Activated CD8-positive, alpha-beta memory T cell treated with anti-CD3 and anti-CD28 coated beads, Interleukin-2, amount 10 ng/mL, durations not matched to agents 7 days and 5 days (primary cell): ENCODE measurements at regions of chr17 and their contacts with region 1.

Region 1: DNA sequence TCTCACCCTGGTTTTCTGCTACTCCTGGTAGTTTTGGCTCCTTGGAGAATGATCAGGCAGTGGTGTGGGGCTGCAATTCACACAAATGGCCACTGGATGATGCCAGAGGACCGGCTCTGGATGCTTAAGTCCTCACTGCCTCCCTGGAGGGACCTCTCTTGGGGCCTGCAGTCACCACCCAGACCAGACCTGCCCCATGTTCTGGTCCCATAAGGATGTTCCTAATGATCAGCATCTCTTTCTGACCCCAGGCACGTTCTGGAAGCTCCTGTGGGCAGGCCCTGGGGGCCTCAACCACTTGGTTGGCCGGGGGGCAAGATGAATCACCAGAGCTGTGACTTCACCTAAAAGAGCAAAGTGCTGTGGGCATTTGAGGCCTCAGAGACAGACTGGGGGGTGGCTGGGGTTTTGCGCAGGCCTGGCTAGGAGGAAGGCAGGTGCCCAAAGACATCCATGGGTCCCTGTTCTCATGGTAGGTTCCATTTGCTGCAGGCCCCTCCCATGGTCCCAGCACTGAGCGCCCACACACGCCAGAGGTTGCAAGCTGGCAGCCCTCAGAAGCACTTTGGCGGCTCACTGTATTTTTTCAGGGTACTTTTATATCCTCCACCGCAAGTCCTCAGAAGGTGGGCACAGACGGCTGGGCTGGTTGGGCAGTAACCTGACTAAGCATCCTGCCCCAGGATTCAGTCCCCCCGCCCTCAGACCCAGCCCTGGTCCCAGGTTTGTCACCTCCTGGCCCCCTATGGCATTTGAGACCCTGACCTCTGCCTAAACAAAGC is 53.2 kb downstream of the NT5M start:
- DNase-seq: peak; percentile 79
- ATAC-seq: peak; percentile 86
- H3K4me3 Mint-ChIP-seq: no peak overlapping the region
- H3K27ac Mint-ChIP-seq: peak overlapping the region; percentile 4
- H3K4me1 Mint-ChIP-seq: no peaks in the 10 kb centered on the region
- H3K27me3 Mint-ChIP-seq: peaks cover 28% of the 10 kb centered on the region

Region 2: DNA sequence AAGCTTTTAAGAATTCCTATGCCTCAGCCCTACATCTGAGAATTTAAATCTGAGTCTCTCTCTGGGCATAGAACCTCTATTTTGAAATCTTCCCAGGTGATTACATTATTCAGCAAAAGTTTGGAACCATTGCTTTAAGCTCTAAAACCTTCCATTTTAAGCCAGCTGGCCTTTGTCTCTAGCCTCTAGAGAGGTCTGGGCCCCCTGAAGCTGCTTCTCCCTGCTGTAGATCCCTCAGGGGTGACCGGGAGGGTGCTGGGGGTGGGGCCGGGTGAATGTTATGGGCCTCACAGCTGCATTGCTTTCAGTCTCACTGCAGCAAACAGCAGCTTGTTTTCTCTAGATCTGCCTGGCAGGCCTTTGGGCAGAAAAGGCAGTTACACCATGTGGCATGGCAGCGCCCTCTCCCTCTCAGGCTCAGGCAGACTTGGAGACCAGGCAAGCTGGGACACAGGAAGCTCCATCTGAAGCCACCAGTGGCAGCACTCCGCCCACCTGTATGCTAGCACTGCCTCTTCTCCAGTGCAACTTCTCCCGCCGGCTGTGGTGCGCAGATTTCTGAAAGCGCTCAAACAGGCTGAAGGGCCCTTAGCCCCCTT is 247.8 kb before region 1 on chr17:
- CTCF ChIA-PET with region 1: no interaction called
- DNase-seq: no peak
- ATAC-seq: no peak
- H3K4me3 Mint-ChIP-seq: no peak overlapping the region
- H3K27ac Mint-ChIP-seq: no peak overlapping the region
- H3K4me1 Mint-ChIP-seq: peaks cover 34% of the 10 kb centered on the region
- H3K27me3 Mint-ChIP-seq: no peaks in the 10 kb centered on the region

Region 3: GRCh38 chr17:17206124-17206912 is 150.0 kb before region 1 on chr17 and contains the start of gene PLD6:
- CTCF ChIA-PET with region 1: no interaction called
- DNase-seq: peak; percentile 94
- ATAC-seq: peak; percentile 70
- H3K4me3 Mint-ChIP-seq: peak within 1 kb of the TSS; percentile 80
- H3K27ac Mint-ChIP-seq: peak within 1 kb of the TSS; percentile 88
- H3K4me1 Mint-ChIP-seq: peaks cover 38% of the 10 kb centered on the region
- H3K27me3 Mint-ChIP-seq: no peaks in the 10 kb centered on the region
- total RNA-seq, gene PLD6: 5.2 to 12.5 TPM

Region 4: DNA sequence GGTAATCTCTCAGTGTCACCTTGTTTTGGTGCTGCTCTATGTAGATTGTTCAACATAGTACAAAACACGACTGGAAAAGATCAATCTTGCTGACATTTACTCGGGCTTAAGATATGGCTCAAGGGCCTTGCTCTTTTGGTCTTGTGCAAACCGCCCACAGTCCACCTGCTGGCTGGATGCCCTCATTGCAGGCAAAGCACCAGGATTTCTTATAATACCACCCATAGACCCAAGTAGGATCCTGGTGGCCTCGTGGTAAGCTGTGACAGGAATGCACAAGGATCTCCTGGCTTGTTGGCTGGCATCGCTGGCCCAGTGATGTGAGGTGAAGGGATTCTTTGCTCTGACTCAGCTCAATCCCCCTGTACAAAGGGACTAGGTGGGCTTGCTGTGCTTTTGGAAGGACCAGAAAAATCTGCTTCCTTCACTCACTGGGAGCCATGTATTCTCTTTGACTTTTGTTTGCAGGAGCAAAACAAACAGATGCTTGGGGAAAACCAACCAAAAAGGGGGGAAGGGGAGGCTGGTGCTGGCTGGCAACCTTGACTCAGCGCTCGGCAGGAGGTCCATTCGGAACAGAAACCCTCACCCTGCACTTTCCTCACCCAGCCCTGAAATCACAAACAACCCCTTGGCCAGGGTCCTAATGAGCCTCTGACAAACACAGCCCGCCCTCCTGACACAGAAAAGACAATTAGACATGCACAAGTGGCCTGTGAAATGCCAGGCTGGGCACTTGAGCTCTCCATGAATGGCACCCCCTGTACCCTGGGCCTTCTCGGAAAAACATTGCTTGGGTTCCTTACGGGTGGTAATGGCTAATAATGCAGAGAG is 83.9 kb after region 1 on chr17:
- CTCF ChIA-PET with region 1: interaction called, 13 read pairs
- DNase-seq: peak; percentile 83
- ATAC-seq: peak; percentile 88
- H3K4me3 Mint-ChIP-seq: no peak overlapping the region
- H3K27ac Mint-ChIP-seq: peak overlapping the region; percentile 28
- H3K4me1 Mint-ChIP-seq: peaks cover 2% of the 10 kb centered on the region
- H3K27me3 Mint-ChIP-seq: no peaks in the 10 kb centered on the region

Region 5: GRCh38 chr17:17446666-17447155 is 90.4 kb after region 1 on chr17:
- CTCF ChIA-PET with region 1: interaction called, 10 read pairs
- DNase-seq: no peak
- ATAC-seq: no peak
- H3K4me3 Mint-ChIP-seq: no peak overlapping the region
- H3K27ac Mint-ChIP-seq: no peak overlapping the region
- H3K4me1 Mint-ChIP-seq: no peaks in the 10 kb centered on the region
- H3K27me3 Mint-ChIP-seq: peaks cover 10% of the 10 kb centered on the region

Region 6: GRCh38 chr17:17523001-17523730 is 166.8 kb after region 1 on chr17:
- CTCF ChIA-PET with region 1: no interaction called
- DNase-seq: no peak
- ATAC-seq: no peak
- H3K4me3 Mint-ChIP-seq: no peak overlapping the region
- H3K27ac Mint-ChIP-seq: no peak overlapping the region
- H3K4me1 Mint-ChIP-seq: no peaks in the 10 kb centered on the region
- H3K27me3 Mint-ChIP-seq: no peaks in the 10 kb centered on the region

Region 7: GRCh38 chr17:17591355-17592298 is 235.3 kb after region 1 on chr17 and contains the start of gene PEMT:
- CTCF ChIA-PET with region 1: interaction called, 17 read pairs
- DNase-seq: peak; percentile 98
- ATAC-seq: peak; percentile 96
- H3K4me3 Mint-ChIP-seq: peak within 1 kb of the TSS; percentile 84
- H3K27ac Mint-ChIP-seq: peak within 1 kb of the TSS; percentile 90
- H3K4me1 Mint-ChIP-seq: peaks cover 22% of the 10 kb centered on the region
- H3K27me3 Mint-ChIP-seq: no peaks in the 10 kb centered on the region
- total RNA-seq, gene PEMT: 17.5 to 18.6 TPM

Region 8: DNA sequence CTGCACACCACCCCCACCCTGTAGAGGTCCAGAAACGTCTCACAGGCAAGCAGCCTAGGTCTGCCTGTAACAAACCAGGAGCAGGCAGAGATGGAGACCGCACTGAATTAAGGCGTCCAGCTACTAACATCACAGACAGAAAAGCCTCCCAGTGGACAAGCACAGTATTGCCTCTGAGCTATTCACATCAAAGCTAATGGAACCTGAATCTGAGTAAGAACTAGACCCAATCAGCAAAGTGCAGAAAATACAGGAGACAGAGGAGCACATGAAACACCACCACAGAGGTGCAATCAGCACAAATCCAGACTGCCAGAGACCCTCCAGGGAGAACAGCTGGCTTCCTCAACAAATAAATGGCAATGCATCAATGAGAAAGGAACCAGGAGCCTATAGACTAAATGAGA is 257.4 kb after region 1 on chr17:
- CTCF ChIA-PET with region 1: interaction called, 10 read pairs
- DNase-seq: peak; percentile 69
- ATAC-seq: peak; percentile 97
- H3K4me3 Mint-ChIP-seq: no peak overlapping the region
- H3K27ac Mint-ChIP-seq: no peak overlapping the region
- H3K4me1 Mint-ChIP-seq: no peaks in the 10 kb centered on the region
- H3K27me3 Mint-ChIP-seq: peaks cover 7% of the 10 kb centered on the region

Region 9: DNA sequence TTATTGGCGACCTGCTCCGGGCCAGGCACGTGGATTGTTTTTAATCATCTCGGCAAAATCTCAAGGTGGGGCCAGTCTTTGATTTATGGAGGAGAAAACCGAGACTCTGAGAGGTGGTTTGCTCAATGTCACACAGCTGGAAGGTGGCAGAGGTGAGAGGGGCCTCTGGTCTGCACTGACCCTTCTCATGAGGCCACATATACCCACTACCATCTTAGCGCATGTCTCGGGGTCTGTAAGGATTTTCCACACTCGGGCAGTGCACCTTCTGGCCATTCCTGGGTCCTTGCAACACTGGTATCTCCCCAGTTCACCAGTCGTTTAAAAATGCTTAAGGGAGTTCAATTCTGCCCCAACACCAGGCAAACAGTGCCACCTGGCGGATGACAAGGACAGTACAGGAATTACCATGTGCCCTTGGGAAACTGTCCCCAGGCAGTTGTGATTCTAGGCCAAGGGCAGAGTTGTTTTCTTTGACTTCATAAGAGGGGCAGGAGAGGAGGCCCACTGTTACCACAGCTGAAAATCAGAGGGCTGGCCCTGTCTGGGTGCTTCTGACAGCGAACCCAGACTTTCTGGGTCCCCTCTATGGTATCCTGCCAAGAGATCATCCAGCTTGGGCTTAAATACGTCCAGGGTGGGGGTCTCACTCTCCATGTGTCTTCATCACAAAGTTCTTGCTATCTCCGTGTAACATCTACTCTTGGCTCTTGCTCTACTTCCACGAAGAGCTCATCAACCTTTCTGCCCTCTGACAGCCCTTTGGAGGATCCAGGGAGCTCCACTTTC is 285.5 kb after region 1 on chr17:
- CTCF ChIA-PET with region 1: interaction called, 80 read pairs
- DNase-seq: peak; percentile 82
- ATAC-seq: peak; percentile 96
- H3K4me3 Mint-ChIP-seq: no peak overlapping the region
- H3K27ac Mint-ChIP-seq: no peak overlapping the region
- H3K4me1 Mint-ChIP-seq: peaks cover 2% of the 10 kb centered on the region
- H3K27me3 Mint-ChIP-seq: peaks cover 6% of the 10 kb centered on the region